ENCODE measurements at regions of chr6 and their contacts with region 1.

Region 1: DNA sequence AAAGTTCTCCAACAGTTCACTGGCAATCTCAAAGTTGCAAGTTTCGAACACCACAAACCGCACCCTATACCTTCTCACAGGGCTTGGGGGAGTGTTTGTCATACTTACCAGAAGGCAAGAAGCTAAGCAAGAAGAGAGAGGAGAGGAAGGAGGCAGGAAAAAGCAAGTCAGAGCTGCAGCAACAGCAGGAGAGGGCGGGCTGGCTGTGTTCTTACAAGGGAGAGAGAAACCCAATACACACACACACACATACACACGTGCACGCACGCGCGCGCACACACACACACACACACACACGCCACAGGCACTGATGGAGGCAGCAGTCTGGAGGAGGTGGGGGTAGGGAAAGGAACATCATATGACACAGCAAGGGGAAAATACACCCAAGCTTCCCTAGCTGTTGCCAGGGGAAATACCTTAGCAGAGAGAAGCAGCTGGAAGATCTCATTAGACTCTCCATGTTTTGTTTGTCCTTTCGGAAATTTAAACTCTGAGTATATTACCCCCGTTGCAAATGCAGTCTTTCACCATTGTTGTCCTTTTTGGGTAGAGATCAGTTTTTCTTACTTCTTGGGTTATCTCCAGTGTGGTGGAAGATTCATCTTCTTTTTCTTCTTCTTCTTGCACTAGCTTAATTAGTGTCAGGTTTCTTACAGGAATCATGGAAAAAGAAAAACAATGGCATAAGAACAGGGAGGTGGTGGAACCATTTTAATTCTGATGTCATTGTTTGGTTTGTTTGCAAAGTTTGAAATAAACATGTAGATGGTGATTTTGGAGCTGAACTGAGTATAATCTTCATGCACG is at the start of gene TXLNB:
- DNase-seq: peak; percentile 89
- H3K4me3 Mint-ChIP-seq: peak within 1 kb of the TSS; percentile 74
- H3K27ac Mint-ChIP-seq: peak within 1 kb of the TSS; percentile 96
- H3K4me1 Mint-ChIP-seq: peaks cover 32% of the 10 kb centered on the region
- H3K27me3 Mint-ChIP-seq: no peaks in the 10 kb centered on the region
- total RNA-seq, gene TXLNB: 0.60 to 0.90 TPM

Region 2: GRCh38 chr6:139062932-139063646 is 228.9 kb before region 1 on chr6:
- CTCF ChIA-PET with region 1: no interaction called
- POLR2A ChIA-PET with region 1: no interaction called
- DNase-seq: no peak
- H3K4me3 Mint-ChIP-seq: no peak overlapping the region
- H3K27ac Mint-ChIP-seq: no peak overlapping the region
- H3K4me1 Mint-ChIP-seq: peaks cover 2% of the 10 kb centered on the region
- H3K27me3 Mint-ChIP-seq: no peaks in the 10 kb centered on the region

Region 3: GRCh38 chr6:139146317-139146726 is 145.7 kb before region 1 on chr6:
- CTCF ChIA-PET with region 1: no interaction called
- POLR2A ChIA-PET with region 1: interaction called, 22 read pairs
- DNase-seq: no peak
- H3K4me3 Mint-ChIP-seq: peak overlapping the region; percentile 49
- H3K27ac Mint-ChIP-seq: peak overlapping the region; percentile 88
- H3K4me1 Mint-ChIP-seq: peaks cover 93% of the 10 kb centered on the region
- H3K27me3 Mint-ChIP-seq: no peaks in the 10 kb centered on the region

Region 4: GRCh38 chr6:139250296-139251044 is 41.5 kb before region 1 on chr6:
- CTCF ChIA-PET with region 1: interaction called, 51 read pairs
- POLR2A ChIA-PET with region 1: interaction called, 53 read pairs
- DNase-seq: peak; percentile 78
- H3K4me3 Mint-ChIP-seq: peak overlapping the region; percentile 70
- H3K27ac Mint-ChIP-seq: peak overlapping the region; percentile 93
- H3K4me1 Mint-ChIP-seq: peaks cover 44% of the 10 kb centered on the region
- H3K27me3 Mint-ChIP-seq: no peaks in the 10 kb centered on the region

Region 5: GRCh38 chr6:139256087-139256486 is 35.9 kb before region 1 on chr6:
- CTCF ChIA-PET with region 1: interaction called, 51 read pairs
- POLR2A ChIA-PET with region 1: interaction called, 53 read pairs
- DNase-seq: no peak
- H3K4me3 Mint-ChIP-seq: no peak overlapping the region
- H3K27ac Mint-ChIP-seq: no peak overlapping the region
- H3K4me1 Mint-ChIP-seq: peaks cover 35% of the 10 kb centered on the region
- H3K27me3 Mint-ChIP-seq: no peaks in the 10 kb centered on the region

Region 6: DNA sequence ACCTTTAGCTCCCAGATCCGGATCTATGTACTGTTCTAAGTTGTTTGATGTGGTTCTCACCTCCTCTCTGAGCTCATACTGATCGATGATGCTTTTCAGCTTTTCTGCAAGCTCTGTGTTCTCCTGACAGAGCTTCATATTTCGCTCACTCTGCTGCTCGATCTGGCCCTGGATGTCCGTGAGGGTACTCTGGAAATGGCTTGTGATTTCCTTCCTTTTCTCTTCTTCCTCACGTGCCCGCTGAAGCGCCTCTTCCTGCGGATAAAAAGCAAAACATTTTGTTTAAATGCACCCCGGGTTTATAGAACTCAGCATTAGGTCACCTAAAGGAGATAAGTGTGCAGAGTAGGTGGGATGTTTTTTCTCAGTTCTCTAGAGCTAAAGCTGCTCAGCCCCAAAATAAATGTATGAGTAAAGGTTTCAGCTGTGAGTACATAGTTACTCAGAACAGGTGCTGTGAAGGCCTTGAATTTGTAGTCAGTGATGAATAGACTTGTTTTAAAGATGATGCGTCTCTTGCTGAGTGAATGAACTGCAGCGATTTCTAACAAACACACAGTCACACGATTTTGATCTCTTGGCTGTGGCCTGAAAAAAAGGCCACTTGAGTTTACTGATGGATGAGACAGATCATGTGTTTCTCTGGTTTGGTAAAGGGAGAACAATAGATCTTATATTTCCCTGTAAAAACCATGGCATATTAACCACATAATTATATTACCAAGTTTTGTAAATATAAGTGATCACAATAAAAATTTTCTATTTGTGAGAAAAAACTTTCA is 29.3 kb before region 1 on chr6:
- CTCF ChIA-PET with region 1: interaction called, 13 read pairs
- POLR2A ChIA-PET with region 1: interaction called, 30 read pairs
- DNase-seq: peak; percentile 32
- H3K4me3 Mint-ChIP-seq: peak overlapping the region; percentile 46
- H3K27ac Mint-ChIP-seq: peak overlapping the region; percentile 74
- H3K4me1 Mint-ChIP-seq: peaks cover 26% of the 10 kb centered on the region
- H3K27me3 Mint-ChIP-seq: no peaks in the 10 kb centered on the region

Region 7: GRCh38 chr6:139323511-139324300 is 31.7 kb after region 1 on chr6:
- CTCF ChIA-PET with region 1: interaction called, 17 read pairs
- POLR2A ChIA-PET with region 1: interaction called, 55 read pairs
- DNase-seq: peak; percentile 81
- H3K4me3 Mint-ChIP-seq: peak overlapping the region; percentile 70
- H3K27ac Mint-ChIP-seq: peak overlapping the region; percentile 96
- H3K4me1 Mint-ChIP-seq: peaks cover 31% of the 10 kb centered on the region
- H3K27me3 Mint-ChIP-seq: no peaks in the 10 kb centered on the region

Region 8: DNA sequence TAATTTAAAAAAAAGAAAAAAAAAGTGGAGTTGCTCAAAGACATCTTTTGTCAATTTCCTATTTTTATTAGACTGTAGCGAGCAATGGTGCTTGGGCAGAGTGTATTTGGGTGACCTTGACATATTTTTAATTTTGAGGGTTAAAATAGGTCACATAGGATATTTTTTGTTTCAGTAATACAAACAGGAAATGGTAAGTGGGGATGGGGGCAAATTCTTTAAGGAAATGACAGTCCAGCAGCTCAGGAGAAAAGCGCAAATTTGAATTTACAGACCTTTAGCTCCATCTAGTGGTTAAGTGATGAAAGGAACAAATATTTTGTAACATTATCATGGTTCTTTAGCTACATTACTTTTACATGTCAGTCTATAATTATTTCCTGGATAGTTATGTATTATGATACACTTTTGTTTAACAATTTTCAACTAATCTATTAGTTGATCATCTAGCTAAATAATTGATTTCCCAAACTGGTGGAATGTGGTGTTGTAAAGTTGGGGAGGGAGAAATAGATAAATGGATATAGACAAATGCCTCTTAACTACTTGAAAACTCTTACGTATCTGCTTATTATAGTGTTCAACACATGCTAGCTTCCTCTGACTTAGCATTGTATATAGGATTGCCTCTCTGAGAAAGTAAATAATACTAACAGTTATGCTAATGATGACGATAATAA is 72.4 kb after region 1 on chr6:
- CTCF ChIA-PET with region 1: interaction called, 15 read pairs
- POLR2A ChIA-PET with region 1: interaction called, 10 read pairs
- DNase-seq: no peak
- H3K4me3 Mint-ChIP-seq: no peak overlapping the region
- H3K27ac Mint-ChIP-seq: no peak overlapping the region
- H3K4me1 Mint-ChIP-seq: peaks cover 41% of the 10 kb centered on the region
- H3K27me3 Mint-ChIP-seq: no peaks in the 10 kb centered on the region

Region 9: DNA sequence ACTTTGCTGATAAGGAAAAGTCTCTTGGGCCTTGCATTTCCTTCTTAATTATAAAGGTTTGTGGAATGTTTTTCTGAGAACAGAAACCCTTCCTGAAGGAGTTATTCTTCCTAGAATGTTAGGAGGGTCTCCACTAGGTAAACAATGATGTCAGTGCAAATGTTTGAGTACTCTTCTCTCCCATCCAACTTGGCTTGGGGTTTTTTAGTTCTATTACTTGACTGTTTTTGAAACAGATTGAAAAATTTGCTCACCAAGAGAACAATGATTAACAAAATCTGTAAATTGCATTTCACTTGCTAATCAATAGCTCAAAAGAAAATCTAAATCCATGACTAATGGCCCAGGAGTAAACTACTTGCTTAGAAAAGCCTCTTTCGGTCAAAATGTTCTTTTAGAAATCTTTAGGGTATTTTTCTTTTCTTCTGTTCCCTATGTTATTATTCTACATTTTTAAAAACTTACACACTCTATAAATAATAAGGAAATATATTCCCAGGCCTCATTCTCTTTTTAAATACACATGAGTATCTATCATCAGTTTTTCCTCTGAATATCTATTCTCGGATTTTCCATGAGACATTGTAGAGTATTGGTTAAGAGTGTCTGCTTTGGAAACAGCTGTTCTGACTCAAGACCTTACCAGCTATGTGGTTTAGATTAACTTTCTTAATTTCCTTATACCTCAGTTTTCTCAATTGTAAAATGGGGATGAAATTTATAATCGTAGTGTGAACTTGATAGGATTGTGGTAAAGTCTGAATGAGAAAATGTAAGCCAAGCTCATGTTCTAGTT is 316.6 kb after region 1 on chr6:
- CTCF ChIA-PET with region 1: no interaction called
- POLR2A ChIA-PET with region 1: no interaction called
- DNase-seq: no peak
- H3K4me3 Mint-ChIP-seq: no peak overlapping the region
- H3K27ac Mint-ChIP-seq: no peak overlapping the region
- H3K4me1 Mint-ChIP-seq: no peaks in the 10 kb centered on the region
- H3K27me3 Mint-ChIP-seq: peaks cover 2% of the 10 kb centered on the region

Measured in activated CD4-positive, alpha-beta memory T cell treated with anti-CD3 and anti-CD28 coated beads, Interleukin-2, amount 10 ng/mL, durations not matched to agents 7 days and 5 days (primary cell).